K562 (cell line): ENCODE measurements at regions of chr14 and their contacts with region 1.

Region 1: GRCh38 chr14:51269634-51270033 is 29.6 kb downstream of the TMX1 start:
- DNase-seq: no peak
- ATAC-seq: no peak
- H3K4me3 ChIP-seq: no peak overlapping the region
- H3K27ac ChIP-seq: no peak overlapping the region
- H3K4me1 ChIP-seq: no peaks in the 10 kb centered on the region
- H3K27me3 ChIP-seq: no peaks in the 10 kb centered on the region
- CTCF ChIP-seq: no peak
- EP300 ChIP-seq: no peak
- POLR2A ChIP-seq: no peak
- RAD21 ChIP-seq: no peak

Region 2: DNA sequence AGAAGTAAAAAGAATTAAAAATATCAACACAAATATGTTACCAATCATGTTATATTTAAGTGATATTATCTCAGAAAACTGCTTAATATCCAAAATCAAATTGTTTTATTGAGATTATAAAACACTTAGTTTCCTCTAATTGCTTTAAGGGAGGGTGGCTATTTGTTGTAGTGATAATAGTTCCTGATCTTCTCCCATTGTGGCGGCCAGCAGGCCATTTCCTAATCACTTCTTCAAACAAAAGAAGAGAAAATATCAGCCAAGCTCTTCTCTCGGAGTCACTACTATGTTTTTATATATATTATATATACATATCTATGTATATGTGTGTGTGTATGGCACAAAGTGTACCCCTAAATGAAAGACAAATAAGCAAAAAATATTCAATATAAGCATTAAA is 1394.2 kb after region 1 on chr14:
- CTCF ChIA-PET with region 1: no interaction called
- POLR2A ChIA-PET with region 1: no interaction called
- in situ Hi-C with region 1: loop called (anchors 10 kb)
- intact Hi-C with region 1: no loop called
- DNase-seq: no peak
- ATAC-seq: no peak
- H3K4me3 ChIP-seq: no peak overlapping the region
- H3K27ac ChIP-seq: no peak overlapping the region
- H3K4me1 ChIP-seq: no peaks in the 10 kb centered on the region
- H3K27me3 ChIP-seq: no peaks in the 10 kb centered on the region
- CTCF ChIP-seq: no peak
- EP300 ChIP-seq: no peak
- POLR2A ChIP-seq: no peak
- RAD21 ChIP-seq: no peak